ENCODE measurements at regions of chr11 and their contacts with region 1.

Region 1: GRCh38 chr11:66638177-66639065 is at the start of gene RBM4:
- H3K4me3 ChIP-seq: peak within 1 kb of the TSS; percentile 62
- H3K27ac ChIP-seq: peak within 1 kb of the TSS; percentile 77
- H3K4me1 ChIP-seq: no peaks in the 10 kb centered on the region; the same call in 1 of the 2 replicates
- CTCF ChIP-seq: peak; percentile 84

Region 2: DNA sequence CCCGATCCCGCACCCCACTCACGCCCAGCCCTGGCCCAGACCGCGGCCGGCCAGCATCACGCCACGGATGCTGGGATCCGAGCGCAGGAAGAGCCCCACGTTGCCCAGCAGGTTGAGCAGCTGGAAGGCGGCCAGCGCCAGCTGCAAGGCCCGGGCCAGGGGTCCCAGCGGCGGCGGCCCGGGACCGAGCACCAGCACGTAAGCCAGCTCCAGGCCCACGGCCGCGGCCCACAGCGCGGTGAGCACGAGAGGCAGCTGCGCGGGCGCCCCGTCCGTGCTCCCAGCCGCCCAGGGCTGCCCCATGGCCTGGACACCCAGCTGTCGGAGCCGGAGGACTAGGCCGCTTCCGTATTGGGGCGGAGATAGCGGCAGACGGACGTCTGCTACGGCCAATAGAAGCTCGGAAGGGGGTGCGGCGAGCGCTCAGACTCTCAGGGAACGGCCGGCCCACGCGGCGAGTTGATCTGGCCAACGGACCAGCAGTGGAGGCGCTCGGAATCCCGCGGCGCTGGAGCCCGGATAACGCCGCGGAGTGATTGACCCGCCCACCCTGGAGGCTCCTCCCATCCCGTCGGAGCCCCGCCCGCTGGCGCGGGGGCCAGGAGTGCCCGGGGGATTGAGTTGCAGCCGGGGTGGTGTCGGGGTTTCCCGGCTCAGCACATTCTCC is 92.6 kb before region 1 on chr11 and contains the start of gene ZDHHC24:
- CTCF ChIA-PET with region 1: no interaction called
- POLR2A ChIA-PET with region 1: interaction called, 15 read pairs
- H3K4me3 ChIP-seq: peak within 1 kb of the TSS; percentile 73
- H3K27ac ChIP-seq: peak within 1 kb of the TSS; percentile 65; the same call in 1 of the 2 replicates
- H3K4me1 ChIP-seq: no peaks in the 10 kb centered on the region
- CTCF ChIP-seq: no peak

Region 3: DNA sequence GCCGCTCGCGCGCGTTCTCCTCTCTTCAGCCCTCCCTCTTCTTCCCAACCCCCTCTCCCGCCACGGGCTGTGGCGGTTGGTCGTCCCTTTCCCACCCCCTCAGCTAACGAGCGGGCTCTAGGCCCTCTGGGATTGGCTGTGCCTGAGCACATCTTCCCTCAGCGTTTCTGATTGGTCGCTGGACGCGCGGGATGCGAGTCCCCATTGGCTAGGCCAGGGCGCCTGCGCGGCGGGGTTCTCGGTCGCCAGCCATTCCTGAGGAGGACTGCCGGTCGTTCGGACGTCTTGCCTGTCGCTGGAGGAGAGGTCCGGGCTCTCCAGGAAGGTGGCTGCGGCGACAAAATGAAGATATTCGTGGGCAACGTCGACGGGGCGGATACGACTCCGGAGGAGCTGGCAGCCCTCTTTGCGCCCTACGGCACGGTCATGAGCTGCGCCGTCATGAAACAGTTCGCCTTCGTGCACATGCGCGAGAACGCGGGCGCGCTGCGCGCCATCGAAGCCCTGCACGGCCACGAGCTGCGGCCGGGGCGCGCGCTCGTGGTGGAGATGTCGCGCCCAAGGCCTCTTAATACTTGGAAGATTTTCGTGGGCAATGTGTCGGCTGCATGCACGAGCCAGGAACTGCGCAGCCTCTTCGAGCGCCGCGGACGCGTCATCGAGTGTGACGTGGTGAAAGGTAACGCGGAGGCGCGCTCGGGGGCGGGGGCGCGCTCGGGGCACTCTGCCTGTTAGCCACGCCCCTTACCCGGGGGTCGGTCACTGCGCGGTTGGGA is 21.9 kb before region 1 on chr11 and contains the start of gene RBM14:
- CTCF ChIA-PET with region 1: no interaction called
- POLR2A ChIA-PET with region 1: interaction called, 98 read pairs
- H3K4me3 ChIP-seq: peak within 1 kb of the TSS; percentile 75
- H3K27ac ChIP-seq: peak within 1 kb of the TSS; percentile 95
- H3K4me1 ChIP-seq: 0 out of 2 replicates have a peak, but pooled peaks cover 3% of the 10 kb centered on the region
- CTCF ChIP-seq: no peak

Region 4: DNA sequence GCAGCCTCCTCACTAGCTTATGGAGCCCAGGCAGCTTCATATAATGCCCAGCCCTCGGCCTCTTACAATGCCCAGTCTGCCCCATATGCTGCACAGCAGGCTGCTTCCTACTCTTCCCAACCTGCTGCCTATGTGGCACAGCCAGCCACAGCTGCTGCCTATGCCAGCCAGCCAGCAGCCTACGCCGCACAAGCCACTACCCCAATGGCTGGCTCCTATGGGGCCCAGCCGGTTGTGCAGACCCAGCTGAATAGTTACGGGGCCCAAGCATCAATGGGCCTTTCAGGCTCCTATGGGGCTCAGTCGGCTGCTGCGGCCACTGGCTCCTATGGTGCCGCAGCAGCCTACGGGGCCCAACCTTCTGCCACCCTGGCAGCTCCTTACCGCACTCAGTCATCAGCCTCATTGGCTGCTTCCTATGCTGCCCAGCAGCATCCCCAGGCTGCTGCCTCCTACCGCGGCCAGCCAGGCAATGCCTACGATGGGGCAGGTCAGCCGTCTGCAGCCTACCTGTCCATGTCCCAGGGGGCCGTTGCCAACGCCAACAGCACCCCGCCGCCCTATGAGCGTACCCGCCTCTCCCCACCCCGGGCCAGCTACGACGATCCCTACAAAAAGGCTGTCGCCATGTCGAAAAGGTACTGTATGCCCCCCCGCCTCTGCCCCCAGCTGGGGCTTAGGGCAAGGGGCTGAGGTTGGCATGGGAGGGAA is 13.2 kb before region 1 on chr11:
- CTCF ChIA-PET with region 1: interaction called, 3 read pairs
- POLR2A ChIA-PET with region 1: interaction called, 42 read pairs
- H3K4me3 ChIP-seq: no peak overlapping the region
- H3K27ac ChIP-seq: no peak overlapping the region
- H3K4me1 ChIP-seq: 0 out of 2 replicates have a peak, but pooled peaks cover 3% of the 10 kb centered on the region
- CTCF ChIP-seq: no peak

Region 5: DNA sequence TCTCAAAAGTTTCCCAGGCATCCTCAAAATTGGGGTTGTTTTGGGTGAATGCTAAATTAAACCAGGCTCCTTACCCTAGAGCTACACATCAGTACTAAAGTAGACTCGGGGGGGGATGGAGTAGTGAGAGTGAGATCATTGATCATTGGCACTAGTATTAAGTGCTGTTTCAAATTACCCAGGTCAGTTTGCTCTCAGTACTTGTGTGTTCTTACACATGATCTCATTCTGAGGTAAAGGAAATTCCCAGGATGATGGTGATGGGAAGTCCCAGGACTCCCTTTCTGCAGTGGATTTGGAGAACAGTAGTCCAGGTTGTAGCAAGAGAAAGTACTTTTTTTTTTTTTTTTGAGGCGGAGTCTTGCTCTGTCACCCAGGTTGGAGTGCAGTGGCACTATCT is 12.6 kb after region 1 on chr11:
- CTCF ChIA-PET with region 1: interaction called, 3 read pairs
- POLR2A ChIA-PET with region 1: interaction called, 36 read pairs
- H3K4me3 ChIP-seq: no peak overlapping the region
- H3K27ac ChIP-seq: no peak overlapping the region
- H3K4me1 ChIP-seq: no peaks in the 10 kb centered on the region
- CTCF ChIP-seq: no peak

Region 6: DNA sequence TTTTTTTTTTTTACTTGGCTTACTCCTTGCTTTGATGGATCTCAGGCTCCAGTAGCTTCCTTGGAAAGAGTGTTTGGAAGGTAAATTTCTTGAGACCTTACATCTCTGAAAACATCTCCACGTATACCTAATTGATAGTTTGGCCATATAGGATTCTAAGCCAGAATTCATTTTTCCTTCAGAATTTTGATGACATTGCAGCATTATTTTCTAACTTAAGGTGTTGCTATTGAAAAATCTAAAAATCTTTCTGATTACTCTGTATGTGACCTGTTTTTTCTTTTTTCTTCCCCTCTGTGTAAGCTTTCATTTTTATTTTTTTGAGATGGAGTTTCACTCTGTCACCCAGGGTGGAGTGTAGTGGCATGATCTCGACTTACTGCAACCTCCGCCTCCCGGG is 113.7 kb after region 1 on chr11:
- CTCF ChIA-PET with region 1: no interaction called
- POLR2A ChIA-PET with region 1: no interaction called
- H3K4me3 ChIP-seq: no peak overlapping the region
- H3K27ac ChIP-seq: no peak overlapping the region
- H3K4me1 ChIP-seq: 0 out of 2 replicates have a peak, but pooled peaks cover 3% of the 10 kb centered on the region
- CTCF ChIP-seq: no peak

Region 7: DNA sequence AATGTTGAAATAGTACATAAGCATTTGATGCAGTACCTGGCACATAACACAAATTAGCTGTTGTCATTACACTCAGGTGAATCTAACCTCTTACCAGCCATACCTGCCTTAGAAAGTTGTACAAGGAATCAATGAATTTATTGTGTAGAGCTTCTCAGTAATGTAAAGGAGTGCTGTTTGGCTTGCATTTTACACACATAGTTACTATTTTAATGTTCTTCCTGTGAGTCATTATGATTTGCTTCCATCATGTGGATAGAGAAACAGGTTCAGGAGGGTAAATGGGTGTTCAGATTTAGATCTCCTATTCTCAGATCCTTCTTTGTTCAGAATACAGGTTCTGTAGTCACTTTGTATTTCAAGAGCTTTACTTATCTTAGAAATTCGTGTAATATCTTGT is 177.2 kb after region 1 on chr11:
- CTCF ChIA-PET with region 1: no interaction called
- POLR2A ChIA-PET with region 1: no interaction called
- H3K4me3 ChIP-seq: no peak overlapping the region
- H3K27ac ChIP-seq: no peak overlapping the region
- H3K4me1 ChIP-seq: no peaks in the 10 kb centered on the region
- CTCF ChIP-seq: no peak